MCF 10A (cell line): ENCODE measurements at regions of chr7 and their contacts with region 1.

Region 1: GRCh38 chr7:87312215-87312865 is 33.1 kb upstream of the CROT start:
- DNase-seq: peak; percentile 71
- H3K4me3 Mint-ChIP-seq: no peak overlapping the region
- H3K27ac Mint-ChIP-seq: no peak overlapping the region
- H3K4me1 Mint-ChIP-seq: peaks cover 13% of the 10 kb centered on the region
- H3K27me3 Mint-ChIP-seq: peaks cover 18% of the 10 kb centered on the region
- CTCF ChIP-seq: peak; percentile 97

Region 2: DNA sequence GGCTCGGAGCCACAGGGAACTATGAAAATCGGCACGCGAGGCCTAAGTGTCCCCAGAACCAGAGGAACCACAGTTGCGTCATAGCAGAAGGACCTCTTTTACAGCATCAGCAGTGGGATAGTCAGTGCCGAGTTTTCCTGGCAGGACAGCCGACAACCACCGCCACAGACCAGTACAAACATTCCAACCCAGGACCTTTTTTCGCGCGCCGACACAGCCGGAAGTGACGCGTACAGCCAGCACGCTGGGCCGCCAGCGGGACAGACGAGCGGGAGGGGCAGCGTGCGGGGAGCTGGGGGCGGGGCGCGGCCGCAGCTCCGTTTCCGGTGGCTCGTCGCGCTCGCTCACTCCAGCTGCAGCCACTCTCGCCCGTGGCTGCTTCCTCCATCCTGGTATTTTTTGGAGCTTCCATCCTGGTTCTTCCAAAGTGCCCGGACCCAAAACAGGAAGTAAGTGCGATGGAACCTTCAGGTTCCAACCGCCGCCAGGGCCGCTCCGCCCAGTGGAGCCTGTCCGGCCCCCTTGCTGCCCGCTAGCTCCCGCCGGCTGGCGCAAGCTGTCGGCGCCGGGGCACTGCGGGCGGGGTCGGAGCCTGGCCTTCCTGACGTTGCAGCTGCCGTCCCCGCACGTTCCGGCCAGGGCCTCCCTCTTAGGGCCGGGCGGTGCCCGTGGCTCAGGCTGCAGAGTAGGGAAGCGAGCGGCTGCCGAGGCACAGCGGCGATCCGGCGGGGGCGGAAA is 160.1 kb before region 1 on chr7 and contains the start of gene DMTF1:
- CTCF ChIA-PET with region 1: no interaction called
- POLR2A ChIA-PET with region 1: interaction called, 30 read pairs
- intact Hi-C with region 1: no loop called
- DNase-seq: peak; percentile 96
- H3K4me3 Mint-ChIP-seq: peak within 1 kb of the TSS; percentile 82
- H3K27ac Mint-ChIP-seq: peak within 1 kb of the TSS; percentile 98
- H3K4me1 Mint-ChIP-seq: peaks cover 18% of the 10 kb centered on the region
- H3K27me3 Mint-ChIP-seq: no peaks in the 10 kb centered on the region
- CTCF ChIP-seq: no peak
- total RNA-seq, gene DMTF1: 72.8 and 79.7 TPM in 2 replicates

Region 3: DNA sequence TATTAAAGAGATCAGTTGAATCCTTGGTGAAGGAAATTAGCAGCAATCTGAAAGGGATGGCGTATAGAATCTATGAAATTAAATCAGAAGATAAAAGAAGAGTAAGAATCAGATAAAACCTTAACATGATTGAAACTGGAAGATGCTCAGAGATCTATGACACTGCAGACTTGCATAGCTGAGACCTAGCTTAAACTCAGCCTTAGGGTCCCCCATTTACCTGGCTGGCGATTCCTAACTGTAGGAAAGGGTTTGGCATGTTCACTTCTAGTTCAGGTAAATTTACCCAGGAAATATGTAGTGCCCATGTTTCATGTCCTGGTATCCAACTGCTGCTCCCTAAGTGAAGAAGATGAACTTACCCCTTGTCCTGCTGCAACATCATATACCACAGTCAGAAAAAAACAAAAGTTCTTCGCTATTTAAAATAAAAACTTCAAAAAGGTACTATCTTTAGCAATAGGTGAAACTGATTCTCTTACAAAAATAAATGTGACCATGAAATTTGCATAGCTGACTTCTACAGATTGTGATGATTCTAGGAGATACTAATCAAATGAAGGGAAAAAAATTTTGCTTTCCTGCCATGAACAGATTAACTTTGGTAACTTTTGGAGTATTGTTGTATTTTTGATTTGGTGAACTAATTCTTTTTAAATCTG is 45.0 kb before region 1 on chr7:
- CTCF ChIA-PET with region 1: no interaction called
- POLR2A ChIA-PET with region 1: no interaction called
- intact Hi-C with region 1: no loop called
- DNase-seq: no peak
- H3K4me3 Mint-ChIP-seq: no peak overlapping the region
- H3K27ac Mint-ChIP-seq: no peak overlapping the region
- H3K4me1 Mint-ChIP-seq: no peaks in the 10 kb centered on the region
- H3K27me3 Mint-ChIP-seq: peaks cover 62% of the 10 kb centered on the region
- CTCF ChIP-seq: no peak

Region 4: GRCh38 chr7:87345166-87345927 is 33.0 kb after region 1 on chr7 and contains the start of gene CROT:
- CTCF ChIA-PET with region 1: interaction called, 32 read pairs
- POLR2A ChIA-PET with region 1: interaction called, 233 read pairs
- intact Hi-C with region 1: loop called (anchors 1 kb)
- DNase-seq: peak; percentile 96
- H3K4me3 Mint-ChIP-seq: peak within 1 kb of the TSS; percentile 99
- H3K27ac Mint-ChIP-seq: peak within 1 kb of the TSS; percentile 88
- H3K4me1 Mint-ChIP-seq: peaks cover 28% of the 10 kb centered on the region
- H3K27me3 Mint-ChIP-seq: no peaks in the 10 kb centered on the region
- CTCF ChIP-seq: no peak
- total RNA-seq, gene CROT: 5.7 and 6.5 TPM in 2 replicates

Region 5: GRCh38 chr7:87411186-87411585 is 98.8 kb after region 1 on chr7:
- CTCF ChIA-PET with region 1: interaction called, 494 read pairs
- POLR2A ChIA-PET with region 1: interaction called, 50 read pairs
- intact Hi-C with region 1: loop called (anchors 1 kb)
- DNase-seq: no peak
- H3K4me3 Mint-ChIP-seq: no peak overlapping the region
- H3K27ac Mint-ChIP-seq: peak overlapping the region; percentile 25
- H3K4me1 Mint-ChIP-seq: no peaks in the 10 kb centered on the region
- H3K27me3 Mint-ChIP-seq: no peaks in the 10 kb centered on the region
- CTCF ChIP-seq: no peak

Region 6: DNA sequence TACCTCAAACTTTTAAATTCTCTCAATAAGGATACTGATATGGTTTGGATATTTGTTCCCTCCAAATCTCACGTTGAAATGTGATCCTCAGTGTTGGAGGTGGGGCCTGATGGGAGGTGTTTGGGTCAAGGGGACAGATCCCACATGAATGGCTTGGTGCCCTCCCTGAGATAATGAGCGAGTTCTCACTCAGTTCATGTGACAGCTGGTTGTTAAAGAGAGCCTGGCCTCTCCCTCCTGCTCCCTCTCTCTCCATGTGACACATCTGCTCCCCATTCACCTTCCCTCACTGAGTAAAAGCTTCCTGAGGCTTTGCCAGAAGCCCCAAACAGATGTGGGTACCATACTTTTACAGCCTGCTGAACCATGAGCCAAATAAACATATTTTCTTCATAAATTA is 143.9 kb after region 1 on chr7:
- CTCF ChIA-PET with region 1: no interaction called
- POLR2A ChIA-PET with region 1: no interaction called
- intact Hi-C with region 1: no loop called
- DNase-seq: no peak
- H3K4me3 Mint-ChIP-seq: no peak overlapping the region
- H3K27ac Mint-ChIP-seq: no peak overlapping the region
- H3K4me1 Mint-ChIP-seq: no peaks in the 10 kb centered on the region
- H3K27me3 Mint-ChIP-seq: peaks cover 76% of the 10 kb centered on the region
- CTCF ChIP-seq: no peak

Region 7: GRCh38 chr7:87564289-87564963 is 252.1 kb after region 1 on chr7:
- CTCF ChIA-PET with region 1: interaction called, 3 read pairs
- POLR2A ChIA-PET with region 1: no interaction called
- intact Hi-C with region 1: loop called (anchors 10 kb)
- DNase-seq: peak; percentile 41
- H3K4me3 Mint-ChIP-seq: no peak overlapping the region
- H3K27ac Mint-ChIP-seq: no peak overlapping the region
- H3K4me1 Mint-ChIP-seq: no peaks in the 10 kb centered on the region
- H3K27me3 Mint-ChIP-seq: peaks cover 26% of the 10 kb centered on the region
- CTCF ChIP-seq: peak; percentile 35

Region 8: GRCh38 chr7:88111136-88111743 is 798.9 kb after region 1 on chr7:
- CTCF ChIA-PET with region 1: no interaction called
- POLR2A ChIA-PET with region 1: no interaction called
- intact Hi-C with region 1: loop called (anchors 1 kb)
- DNase-seq: peak; percentile 43
- H3K4me3 Mint-ChIP-seq: no peak overlapping the region
- H3K27ac Mint-ChIP-seq: no peak overlapping the region
- H3K4me1 Mint-ChIP-seq: no peaks in the 10 kb centered on the region
- H3K27me3 Mint-ChIP-seq: peaks cover 77% of the 10 kb centered on the region
- CTCF ChIP-seq: peak; percentile 51